BJ (cell line): ENCODE measurements at regions of chr11 and their contacts with region 1.

Region 1: DNA sequence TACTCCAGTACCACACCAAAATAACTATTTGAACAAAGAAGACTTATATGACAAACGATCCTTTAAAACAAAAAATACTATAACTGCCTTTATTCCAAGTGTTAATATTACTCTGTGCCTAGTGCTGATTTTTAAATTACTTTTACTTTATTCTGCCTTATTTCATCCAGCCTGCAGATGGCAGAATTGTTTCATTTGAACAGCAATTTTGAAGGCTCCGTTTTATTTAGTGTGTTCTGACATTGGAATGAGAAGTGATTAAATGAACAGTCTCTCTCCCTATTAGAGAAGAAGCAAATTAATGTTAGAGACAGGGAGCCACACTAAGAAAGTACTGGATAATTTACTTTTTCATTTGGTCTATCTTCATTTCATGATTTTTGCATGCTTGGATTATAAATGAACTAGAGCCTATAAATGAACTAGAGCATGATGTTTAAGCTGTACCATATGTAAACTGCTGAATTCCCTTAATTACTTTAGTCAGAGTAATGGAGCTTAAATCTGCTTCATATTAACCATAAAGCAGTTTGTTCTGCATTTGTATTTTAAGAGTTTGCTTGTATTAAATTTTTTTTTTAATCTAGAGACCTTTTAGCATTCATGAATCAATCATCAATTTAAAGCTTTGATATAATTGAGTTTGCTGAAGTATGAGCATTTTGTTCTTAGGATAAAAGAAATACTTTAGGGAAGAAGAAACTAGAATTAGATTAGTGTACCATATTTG is 9.8 kb downstream of the PDHX start:
- DNase-seq: no peak
- H3K4me3 ChIP-seq: no peak overlapping the region
- H3K27me3 ChIP-seq: no peaks in the 10 kb centered on the region
- CTCF ChIP-seq: peak; percentile 64

Region 2: GRCh38 chr11:34909955-34910354 is 16.3 kb before region 1 on chr11:
- CTCF ChIA-PET with region 1: no interaction called
- POLR2A ChIA-PET with region 1: no interaction called
- DNase-seq: no peak
- H3K4me3 ChIP-seq: no peak overlapping the region
- H3K27me3 ChIP-seq: no peaks in the 10 kb centered on the region
- CTCF ChIP-seq: no peak

Region 3: GRCh38 chr11:35974882-35975589 is 1048.8 kb after region 1 on chr11:
- CTCF ChIA-PET with region 1: no interaction called
- POLR2A ChIA-PET with region 1: interaction called, 10 read pairs
- DNase-seq: no peak
- H3K4me3 ChIP-seq: no peak overlapping the region
- H3K27me3 ChIP-seq: no peaks in the 10 kb centered on the region
- CTCF ChIP-seq: no peak